Spleen (tissue), 13 donors: ENCODE measurements at regions of chr11 and their contacts with region 1.

Region 1: DNA sequence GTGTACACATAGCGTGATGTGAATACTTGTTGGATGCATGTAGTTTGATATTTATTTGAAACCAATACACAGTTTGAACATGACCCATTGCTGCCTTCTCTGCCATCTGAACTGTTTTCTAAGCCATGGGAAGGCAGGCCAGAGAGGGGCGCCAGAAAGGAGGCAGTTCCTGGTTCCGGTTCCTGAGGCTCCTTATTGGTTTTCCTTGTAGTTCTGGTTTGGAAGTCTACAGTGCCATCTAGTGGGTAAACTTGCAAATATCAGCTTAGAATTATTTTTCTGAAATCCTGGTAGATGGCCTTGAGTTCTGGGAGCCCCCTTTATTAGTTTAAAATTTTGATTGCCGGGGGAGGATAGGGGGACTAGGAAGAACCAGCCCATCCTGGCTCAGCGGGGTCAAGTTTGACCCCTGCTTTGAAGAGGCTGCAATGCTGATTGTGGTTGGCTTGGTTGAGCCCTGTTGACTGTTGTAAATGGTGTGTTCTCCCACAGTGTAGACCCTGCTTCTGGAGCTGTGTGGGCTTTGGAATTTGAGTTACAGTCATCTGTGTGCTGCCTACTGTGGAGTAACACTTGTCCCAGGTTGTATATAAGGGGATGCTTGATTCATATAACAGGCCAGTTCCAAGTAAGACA is 48.4 kb downstream of the GRAMD1B start:
- DNase-seq: no peak
- H3K4me3 ChIP-seq: peak overlapping the region in 1 of 8 donors; percentile 35
- H3K27ac ChIP-seq: peak overlapping the region in 3 of 8 donors; percentile 2 to 60 (median 56)
- H3K4me1 ChIP-seq: peaks cover 0 to 71% (median 15%) of the 10 kb centered on the region in 6 donors
- H3K27me3 ChIP-seq: peaks cover 0 to 7% (median 0%) of the 10 kb centered on the region in 7 donors
- CTCF ChIP-seq: peak; percentile 23 to 75 (median 68)
- POLR2A ChIP-seq: no peak

Region 2: GRCh38 chr11:123122341-123122740 is 356.1 kb before region 1 on chr11:
- intact Hi-C with region 1: no loop called
- DNase-seq: no peak
- H3K4me3 ChIP-seq: no peak overlapping the region
- H3K27ac ChIP-seq: peak overlapping the region in 7 of 8 donors; percentile 38 to 84 (median 63)
- H3K4me1 ChIP-seq: peaks cover 0 to 22% (median 3%) of the 10 kb centered on the region in 6 donors
- H3K27me3 ChIP-seq: no peaks in the 10 kb centered on the region
- CTCF ChIP-seq: no peak
- POLR2A ChIP-seq: no peak

Region 3: GRCh38 chr11:123301696-123302400 is 176.6 kb before region 1 on chr11:
- intact Hi-C with region 1: loop called (anchors 5 kb)
- DNase-seq: peak; percentile 93
- H3K4me3 ChIP-seq: peak overlapping the region in 7 of 8 donors; percentile 22 to 69 (median 37)
- H3K27ac ChIP-seq: peak overlapping the region in 2 of 8 donors; percentile 14 to 22
- H3K4me1 ChIP-seq: peaks cover 6 to 43% (median 32%) of the 10 kb centered on the region in 6 donors
- H3K27me3 ChIP-seq: peaks cover 0 to 58% (median 14%) of the 10 kb centered on the region in 7 donors
- CTCF ChIP-seq: peak; percentile 30 to 98 (median 92)
- POLR2A ChIP-seq: no peak

Region 4: DNA sequence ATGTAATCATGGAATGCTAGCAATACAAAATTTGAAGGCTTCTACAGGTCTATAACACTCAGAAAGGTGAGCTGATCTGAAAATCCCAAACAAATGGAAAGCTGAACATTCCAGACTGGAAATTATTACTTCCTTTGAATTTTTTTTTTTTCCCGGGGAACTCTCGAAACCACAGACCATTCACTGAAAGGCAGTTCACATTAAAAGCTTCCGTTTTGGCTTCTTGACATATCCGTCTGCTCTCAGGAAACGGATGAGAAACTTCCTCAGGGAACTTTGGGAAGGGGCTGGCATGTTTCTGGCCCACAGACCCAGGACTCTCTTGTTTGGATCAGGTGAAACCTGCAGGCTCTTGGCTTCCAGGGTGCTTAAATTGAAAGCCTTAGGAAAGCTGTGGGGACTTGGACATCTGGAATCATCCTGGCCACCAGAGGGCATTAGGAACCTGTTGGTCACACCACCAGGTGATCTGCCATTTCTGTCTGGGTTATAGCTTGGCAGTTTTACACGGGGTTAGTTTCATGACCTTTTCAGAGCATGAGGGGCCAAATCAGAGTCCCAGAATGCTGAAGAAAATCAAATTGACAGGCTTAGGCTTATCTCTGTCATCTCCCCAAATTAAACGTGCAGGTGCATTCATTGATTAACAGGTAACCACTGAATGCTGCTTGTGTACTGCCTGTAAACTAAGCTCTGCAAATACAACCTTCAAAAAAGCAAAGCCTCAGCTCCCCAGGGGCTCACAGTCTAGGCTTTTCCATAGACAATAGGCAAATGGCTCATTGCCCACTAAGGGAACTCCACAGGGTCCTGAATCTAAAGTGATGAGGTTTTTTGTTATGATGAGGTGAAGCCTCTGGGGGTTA is 71.1 kb before region 1 on chr11:
- intact Hi-C with region 1: loop called (anchors 5 kb)
- DNase-seq: no peak
- H3K4me3 ChIP-seq: no peak overlapping the region
- H3K27ac ChIP-seq: no peak overlapping the region
- H3K4me1 ChIP-seq: peaks cover 0 to 12% (median 4%) of the 10 kb centered on the region in 6 donors
- H3K27me3 ChIP-seq: peaks cover 0 to 25% (median 0%) of the 10 kb centered on the region in 7 donors
- CTCF ChIP-seq: peak; percentile 6 to 71 (median 56)
- POLR2A ChIP-seq: no peak

Region 5: GRCh38 chr11:123560006-123560405 is 81.5 kb after region 1 on chr11:
- intact Hi-C with region 1: no loop called
- DNase-seq: no peak
- H3K4me3 ChIP-seq: peak overlapping the region in 3 of 8 donors; percentile 21 to 47 (median 30)
- H3K27ac ChIP-seq: peak overlapping the region in 3 of 8 donors; percentile 21 to 26 (median 23)
- H3K4me1 ChIP-seq: peaks cover 0 to 34% (median 14%) of the 10 kb centered on the region in 6 donors
- H3K27me3 ChIP-seq: peaks cover 0 to 20% (median 0%) of the 10 kb centered on the region in 7 donors
- CTCF ChIP-seq: no peak
- POLR2A ChIP-seq: no peak